Endothelial cell of umbilical vein (primary cell): ENCODE measurements at regions of chr1 and their contacts with region 1.

Region 1: DNA sequence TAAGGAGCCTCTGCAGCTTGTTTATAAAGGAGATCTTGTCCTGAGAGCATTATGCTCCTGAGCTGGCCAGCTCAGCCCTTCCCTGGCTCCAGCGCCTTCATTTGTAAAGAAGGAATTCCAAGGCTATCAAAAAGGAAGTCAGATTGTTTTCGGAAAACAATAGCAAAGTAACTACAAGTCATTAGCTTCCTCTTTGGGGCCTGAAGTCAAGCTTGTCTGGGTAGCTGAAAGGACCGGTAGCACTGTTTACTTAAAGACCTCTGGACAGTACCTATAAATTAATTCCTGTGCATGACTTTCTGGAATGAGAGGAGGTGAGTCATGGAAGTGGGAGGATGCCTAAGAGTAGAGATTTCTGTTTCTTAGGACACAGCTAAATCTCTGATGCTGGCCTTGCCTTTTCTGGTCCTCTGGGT is 20.7 kb upstream of the GJA5 start:
- DNase-seq: peak; percentile 94
- H3K4me3 ChIP-seq: no peak overlapping the region
- H3K27ac ChIP-seq: peak overlapping the region; percentile 57
- H3K4me1 ChIP-seq: peaks cover 19% of the 10 kb centered on the region
- H3K27me3 ChIP-seq: peaks cover 13 to 19% of the 10 kb centered on the region in 2 experiments
- CTCF ChIP-seq: no peak
- POLR2A ChIP-seq: no peak

Region 2: DNA sequence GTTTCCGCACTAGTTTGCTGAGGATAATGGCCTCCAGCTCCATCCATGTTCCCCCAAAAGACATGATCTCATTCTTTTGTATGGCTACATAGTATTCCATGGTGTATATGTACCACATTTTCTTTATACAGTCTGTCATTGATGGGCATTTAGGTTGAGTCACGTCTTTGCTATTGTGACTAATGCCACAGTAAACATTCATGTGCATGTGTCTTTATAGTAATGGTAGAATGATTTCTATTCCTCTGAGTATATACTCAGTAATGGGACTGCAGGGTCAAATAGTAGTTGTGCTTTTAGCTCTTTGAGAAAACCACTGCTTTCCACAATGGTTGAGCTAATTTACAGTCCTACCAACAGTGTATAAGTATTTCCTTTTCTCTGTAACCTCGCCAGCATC is 318.0 kb before region 1 on chr1:
- CTCF ChIA-PET with region 1: no interaction called
- POLR2A ChIA-PET with region 1: no interaction called
- dilution Hi-C with region 1: no loop called
- intact Hi-C with region 1: no loop called
- DNase-seq: no peak
- H3K4me3 ChIP-seq: no peak overlapping the region
- H3K27ac ChIP-seq: no peak overlapping the region
- H3K4me1 ChIP-seq: no peaks in the 10 kb centered on the region
- H3K27me3 ChIP-seq: no peaks in the 10 kb centered on the region
- CTCF ChIP-seq: no peak
- POLR2A ChIP-seq: no peak

Region 3: DNA sequence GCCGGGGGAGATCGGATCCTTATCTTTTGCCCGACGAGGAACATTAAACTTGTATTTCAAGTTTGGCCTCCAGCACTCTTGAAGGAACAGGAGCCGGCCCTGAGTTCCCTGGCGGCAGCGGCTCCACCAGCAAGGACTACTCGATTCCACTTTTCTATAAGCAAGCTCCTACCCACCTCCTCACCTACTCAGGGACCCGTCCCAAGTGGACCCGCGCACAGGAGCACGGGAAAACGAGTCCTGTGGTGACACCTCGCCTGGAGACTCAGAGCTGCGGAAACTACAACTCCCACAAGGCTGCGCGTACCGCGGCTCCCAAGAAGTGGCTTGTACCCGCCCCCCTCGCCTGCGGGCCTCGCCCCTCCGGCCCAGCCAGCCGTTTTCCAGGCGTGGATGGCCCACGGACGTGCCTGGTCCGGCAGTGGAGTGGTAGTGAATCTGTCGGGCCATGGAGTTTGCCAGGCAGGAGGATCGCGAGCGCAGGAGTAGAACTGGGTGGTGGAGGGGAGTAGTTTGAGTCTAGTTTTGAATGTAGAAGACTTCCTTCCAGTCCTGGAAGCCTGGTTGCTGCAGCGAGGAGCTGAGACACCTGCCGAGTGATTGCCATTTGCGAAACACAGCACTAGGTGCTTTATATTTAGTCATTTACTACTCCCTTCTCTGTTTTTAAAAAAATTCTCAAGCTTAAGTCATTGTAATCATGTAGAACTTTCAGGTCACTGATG is 110.6 kb before region 1 on chr1 and contains the start of gene ACP6:
- CTCF ChIA-PET with region 1: no interaction called
- POLR2A ChIA-PET with region 1: no interaction called
- dilution Hi-C with region 1: no loop called
- intact Hi-C with region 1: loop called (anchors 1 kb)
- DNase-seq: peak; percentile 97
- H3K4me3 ChIP-seq: peak within 1 kb of the TSS; percentile 57 to 79 (median 76)
- H3K27ac ChIP-seq: no peak within 1 kb of the TSS
- H3K4me1 ChIP-seq: peaks cover 13% of the 10 kb centered on the region
- H3K27me3 ChIP-seq: no peaks in the 10 kb centered on the region
- CTCF ChIP-seq: no peak
- POLR2A ChIP-seq: peak; percentile 45
- total RNA-seq, gene ACP6: 9.4 and 11.1 TPM in 2 replicates

Region 4: GRCh38 chr1:147676290-147677053 is 104.6 kb before region 1 on chr1:
- CTCF ChIA-PET with region 1: no interaction called
- POLR2A ChIA-PET with region 1: no interaction called
- dilution Hi-C with region 1: no loop called
- intact Hi-C with region 1: loop called (anchors 1 kb)
- DNase-seq: peak; percentile 39
- H3K4me3 ChIP-seq: no peak overlapping the region
- H3K27ac ChIP-seq: peak overlapping the region; percentile 70
- H3K4me1 ChIP-seq: peaks cover 18% of the 10 kb centered on the region
- H3K27me3 ChIP-seq: no peaks in the 10 kb centered on the region
- CTCF ChIP-seq: no peak
- POLR2A ChIP-seq: no peak

Region 5: DNA sequence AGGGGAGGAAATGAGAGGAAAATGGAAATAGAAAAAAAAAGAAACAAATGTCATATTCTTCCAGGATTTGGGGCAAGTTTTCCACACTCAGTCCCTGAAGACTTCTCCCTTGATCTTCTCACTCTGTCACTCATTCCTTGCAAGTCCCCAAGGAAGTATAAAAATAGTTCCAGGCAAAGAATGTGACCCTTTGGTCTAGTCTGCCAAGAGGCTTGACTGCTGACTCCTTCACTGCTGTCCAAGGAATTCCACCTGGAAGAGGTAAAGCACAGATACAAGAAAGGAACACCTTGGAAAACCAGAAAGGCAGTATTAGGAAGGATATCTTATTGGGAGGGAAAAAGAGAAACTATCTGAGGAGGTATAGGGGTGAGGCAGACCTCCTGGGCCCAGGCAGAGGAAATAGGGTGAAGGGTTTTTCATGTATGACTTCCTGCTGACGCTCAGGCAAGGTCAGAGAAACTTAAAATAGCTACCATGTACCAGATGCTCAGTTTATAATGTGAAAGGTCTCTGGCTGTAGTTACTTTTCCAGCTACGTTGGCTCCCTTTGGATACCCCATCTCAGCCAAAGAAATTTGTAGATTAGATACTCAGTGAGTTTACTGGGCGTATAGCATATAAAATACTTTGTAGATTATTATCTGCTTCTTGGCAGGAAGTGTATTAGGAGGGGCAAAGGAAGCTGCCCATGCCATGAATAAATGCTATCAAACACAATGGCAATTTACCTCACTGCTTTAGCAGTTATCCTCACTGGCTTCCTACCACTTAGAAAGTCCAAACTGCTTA is 18.6 kb before region 1 on chr1:
- CTCF ChIA-PET with region 1: interaction called, 4 read pairs
- POLR2A ChIA-PET with region 1: no interaction called
- dilution Hi-C with region 1: no loop called
- intact Hi-C with region 1: loop called (anchors 1 kb)
- DNase-seq: peak; percentile 41
- H3K4me3 ChIP-seq: no peak overlapping the region
- H3K27ac ChIP-seq: no peak overlapping the region
- H3K4me1 ChIP-seq: peaks cover 16% of the 10 kb centered on the region
- H3K27me3 ChIP-seq: peaks cover 19 to 26% of the 10 kb centered on the region in 2 experiments
- CTCF ChIP-seq: no peak
- POLR2A ChIP-seq: no peak

Region 6: GRCh38 chr1:147794570-147794969 is 13.5 kb after region 1 on chr1:
- CTCF ChIA-PET with region 1: interaction called, 20 read pairs
- POLR2A ChIA-PET with region 1: interaction called, 3 read pairs
- dilution Hi-C with region 1: no loop called
- intact Hi-C with region 1: loop called (anchors 1 kb)
- DNase-seq: peak; percentile 98
- H3K4me3 ChIP-seq: peak overlapping the region in 1 of 3 experiments; percentile 19
- H3K27ac ChIP-seq: peak overlapping the region; percentile 98
- H3K4me1 ChIP-seq: peaks cover 19% of the 10 kb centered on the region
- H3K27me3 ChIP-seq: no peaks in the 10 kb centered on the region
- CTCF ChIP-seq: no peak
- POLR2A ChIP-seq: peak; percentile 61

Region 7: DNA sequence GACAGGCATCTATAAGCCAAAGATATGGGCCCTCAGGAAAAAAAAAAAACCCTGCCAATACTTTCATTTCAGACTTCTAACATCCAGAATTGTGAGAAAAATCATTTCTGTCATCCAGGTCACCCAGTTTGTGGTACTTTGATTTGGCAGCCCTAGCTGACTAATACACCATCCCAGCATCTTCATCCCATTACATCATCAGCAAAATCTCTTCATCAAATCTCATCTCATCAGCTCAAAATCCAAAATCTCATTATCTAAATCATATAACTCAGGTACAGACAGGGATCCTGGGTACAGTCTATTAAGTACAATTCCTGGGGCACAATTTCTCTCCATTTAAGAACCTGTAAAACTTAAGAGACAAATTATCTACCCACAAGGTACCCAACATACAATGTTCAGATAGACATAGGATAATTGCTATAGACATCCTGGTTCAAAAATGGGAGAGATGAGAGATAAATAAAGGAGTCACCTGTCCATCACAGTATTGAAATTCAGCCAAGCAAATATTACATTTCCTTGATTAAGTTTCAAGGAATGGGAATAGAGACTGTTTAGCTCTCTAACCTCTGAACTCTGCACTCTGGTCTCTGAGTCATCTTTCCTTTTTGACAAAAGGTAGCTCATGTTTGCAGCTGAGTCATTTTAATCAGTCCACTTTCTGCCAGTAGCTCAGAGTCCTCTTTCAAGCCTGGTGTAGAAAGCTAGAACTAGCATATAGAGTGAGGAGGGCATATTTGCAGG is 69.9 kb after region 1 on chr1:
- CTCF ChIA-PET with region 1: interaction called, 4 read pairs
- POLR2A ChIA-PET with region 1: no interaction called
- dilution Hi-C with region 1: no loop called
- intact Hi-C with region 1: loop called (anchors 2 kb)
- DNase-seq: peak; percentile 85
- H3K4me3 ChIP-seq: no peak overlapping the region
- H3K27ac ChIP-seq: peak overlapping the region; percentile 21
- H3K4me1 ChIP-seq: peaks cover 42% of the 10 kb centered on the region
- H3K27me3 ChIP-seq: no peaks in the 10 kb centered on the region
- CTCF ChIP-seq: no peak
- POLR2A ChIP-seq: no peak

Region 8: GRCh38 chr1:147878022-147878421 is 97.0 kb after region 1 on chr1:
- CTCF ChIA-PET with region 1: no interaction called
- POLR2A ChIA-PET with region 1: no interaction called
- dilution Hi-C with region 1: no loop called
- intact Hi-C with region 1: loop called (anchors 1 kb)
- DNase-seq: peak; percentile 89
- H3K4me3 ChIP-seq: no peak overlapping the region
- H3K27ac ChIP-seq: peak overlapping the region; percentile 73
- H3K4me1 ChIP-seq: peaks cover 28% of the 10 kb centered on the region
- H3K27me3 ChIP-seq: no peaks in the 10 kb centered on the region
- CTCF ChIP-seq: no peak
- POLR2A ChIP-seq: no peak